B cell (primary cell): ENCODE measurements at regions of chr12 and their contacts with region 1.

Region 1: DNA sequence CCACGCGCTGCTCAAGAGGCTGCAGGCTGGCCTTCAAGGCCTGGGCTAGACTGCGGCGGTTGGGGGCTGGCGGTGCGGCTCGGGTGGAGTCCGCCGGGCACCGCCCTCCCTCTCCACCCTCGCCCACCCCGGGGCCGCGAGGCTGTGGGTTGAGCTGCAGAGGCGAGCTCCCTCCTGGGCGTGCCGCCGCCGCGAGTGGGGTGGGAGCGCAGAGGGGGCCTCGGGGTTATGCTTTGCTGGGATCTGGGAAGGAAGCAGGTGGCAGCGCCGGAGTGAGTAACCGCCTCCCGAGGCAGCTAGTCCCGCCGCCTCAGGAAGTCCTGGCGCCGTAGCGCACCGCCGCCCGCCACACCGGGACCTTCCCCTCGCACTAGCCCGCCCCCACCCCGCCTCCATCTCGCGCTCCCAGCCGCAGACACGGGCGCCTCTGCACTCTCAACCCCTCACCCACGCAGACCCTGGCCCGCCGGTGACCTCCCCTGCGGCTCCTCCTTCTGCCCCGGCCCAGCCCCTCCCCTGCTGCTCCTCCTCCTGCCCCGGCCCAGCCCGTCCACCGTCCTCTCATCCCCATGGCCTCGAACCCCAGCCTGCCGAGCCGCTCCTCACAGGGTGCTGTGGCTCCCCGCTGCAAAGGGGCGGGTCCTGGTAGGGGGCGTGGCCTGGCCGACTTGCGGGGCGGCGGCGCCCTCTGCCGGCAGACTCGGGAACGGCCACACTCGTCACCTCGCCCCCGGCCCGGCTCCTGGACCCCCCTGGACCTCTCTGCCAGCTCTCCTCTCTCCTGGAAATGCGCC is 16.6 kb downstream of the TAMALIN start:
- DNase-seq: peak; percentile 93
- ATAC-seq: peak; percentile 71
- H3K4me3 ChIP-seq: peak overlapping the region in 4 of 5 experiments; percentile 53 to 77 (median 60)
- H3K4me3 Mint-ChIP-seq: peak overlapping the region; percentile 88
- H3K27ac ChIP-seq: peak overlapping the region in 1 of 2 donors; percentile 31
- H3K27ac Mint-ChIP-seq: peak overlapping the region; percentile 53
- H3K4me1 ChIP-seq: peaks cover 35 to 56% of the 10 kb centered on the region in 2 donors
- H3K4me1 Mint-ChIP-seq: peaks cover 52% of the 10 kb centered on the region
- H3K27me3 ChIP-seq: no peaks in the 10 kb centered on the region
- H3K27me3 Mint-ChIP-seq: no peaks in the 10 kb centered on the region
- CTCF ChIP-seq: peak; percentile 93

Region 2: DNA sequence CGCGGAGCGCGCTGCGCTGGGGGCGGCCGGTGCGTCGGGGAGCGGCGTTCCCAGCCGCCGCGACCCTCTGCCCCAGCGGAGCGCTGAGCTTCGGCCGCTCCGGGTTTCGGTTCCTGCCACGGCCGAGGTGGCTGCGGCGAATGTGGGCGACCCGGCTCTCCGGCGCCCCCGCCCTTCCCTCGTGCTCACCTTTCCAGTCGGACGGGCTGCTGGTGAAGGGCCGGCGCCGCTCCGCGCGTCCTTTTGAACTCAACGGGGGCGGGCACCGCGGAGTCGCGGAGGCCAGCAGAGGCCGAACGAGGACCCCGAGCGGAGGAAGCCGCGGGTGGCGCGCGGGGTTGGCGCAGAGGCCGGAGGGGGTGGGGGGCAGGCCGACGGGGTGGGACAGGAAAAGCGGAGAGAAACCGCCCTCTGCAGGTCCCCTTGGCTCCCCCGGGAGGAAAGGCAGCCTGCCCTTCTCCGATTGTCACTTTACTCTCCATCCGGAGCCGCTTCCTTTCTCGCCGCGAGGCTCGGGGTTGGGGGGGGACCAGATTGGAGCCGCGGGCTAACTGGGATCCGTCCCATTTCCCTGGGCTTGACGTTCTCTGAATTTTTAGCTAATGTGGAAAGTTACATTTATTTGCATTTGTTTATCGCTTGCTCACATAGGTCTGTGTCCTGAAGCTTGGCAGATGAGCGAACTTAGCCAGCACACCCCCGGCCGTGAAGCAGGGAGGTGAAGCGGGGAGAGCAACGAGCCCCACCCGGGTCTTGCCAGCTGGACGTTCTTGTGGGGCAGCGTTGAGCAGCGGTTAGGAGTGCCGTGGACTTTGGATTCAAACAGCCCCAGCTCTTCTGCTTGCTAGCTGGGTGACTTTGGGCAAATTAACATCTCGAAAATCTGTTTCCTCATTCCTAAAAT is 753.1 kb before region 1 on chr12 and contains the start of gene SMAGP:
- CTCF ChIA-PET with region 1: no interaction called
- POLR2A ChIA-PET with region 1: no interaction called
- intact Hi-C with region 1: no loop called
- DNase-seq: peak; percentile 79
- ATAC-seq: peak; percentile 75
- H3K4me3 ChIP-seq: peak within 1 kb of the TSS; percentile 52 to 86 (median 74)
- H3K4me3 Mint-ChIP-seq: peak within 1 kb of the TSS; percentile 95
- H3K27ac ChIP-seq: peak within 1 kb of the TSS; percentile 12 to 64
- H3K27ac Mint-ChIP-seq: peak within 1 kb of the TSS; percentile 91
- H3K4me1 ChIP-seq: peaks cover 19 to 20% of the 10 kb centered on the region in 2 donors
- H3K4me1 Mint-ChIP-seq: peaks cover 31% of the 10 kb centered on the region
- H3K27me3 ChIP-seq: no peaks in the 10 kb centered on the region
- H3K27me3 Mint-ChIP-seq: no peaks in the 10 kb centered on the region
- CTCF ChIP-seq: no peak
- total RNA-seq, gene SMAGP: 8.0 and 10.4 TPM in 2 replicates

Region 3: DNA sequence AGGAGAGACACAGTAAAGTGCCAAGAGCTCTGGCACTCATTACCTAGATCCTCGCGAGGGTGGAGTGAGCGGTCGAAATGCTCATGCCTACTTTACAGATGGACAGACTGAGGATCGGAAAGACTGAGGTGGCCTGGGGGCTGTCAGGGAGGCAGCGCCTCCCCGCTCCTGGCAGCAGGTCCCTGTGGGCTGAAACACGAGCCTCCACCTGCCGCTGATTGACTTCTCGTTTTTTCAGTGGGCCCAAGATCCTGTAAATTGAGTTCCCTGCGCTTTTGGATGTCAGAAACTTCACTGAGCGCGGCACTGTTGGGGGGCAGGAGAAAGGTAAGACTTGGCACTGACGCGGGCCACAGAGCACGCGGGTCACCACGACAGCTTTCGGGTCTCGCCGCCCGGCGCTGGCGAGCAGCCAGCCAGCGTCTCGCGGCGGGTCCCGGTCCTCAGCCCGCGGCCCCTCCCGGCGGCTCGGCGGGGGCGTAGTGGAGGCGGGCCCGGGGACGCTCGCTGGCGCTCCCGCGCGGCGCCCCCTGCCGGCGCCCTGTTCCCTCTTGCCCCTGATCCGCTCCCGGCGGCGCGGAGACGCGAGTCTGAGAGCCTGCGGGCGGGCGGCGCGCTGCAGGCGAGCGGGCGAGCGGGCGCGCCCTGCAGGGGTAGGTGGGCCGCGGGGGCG is 432.9 kb before region 1 on chr12:
- CTCF ChIA-PET with region 1: no interaction called
- POLR2A ChIA-PET with region 1: no interaction called
- intact Hi-C with region 1: no loop called
- DNase-seq: peak; percentile 84
- ATAC-seq: peak; percentile 88
- H3K4me3 ChIP-seq: peak overlapping the region; percentile 11 to 56 (median 50)
- H3K4me3 Mint-ChIP-seq: peak overlapping the region; percentile 90
- H3K27ac ChIP-seq: no peak overlapping the region
- H3K27ac Mint-ChIP-seq: peak overlapping the region; percentile 73
- H3K4me1 ChIP-seq: peaks cover 12 to 16% of the 10 kb centered on the region in 2 donors
- H3K4me1 Mint-ChIP-seq: peaks cover 19% of the 10 kb centered on the region
- H3K27me3 ChIP-seq: peaks cover 0 to 29% (median 26%) of the 10 kb centered on the region in 4 experiments
- H3K27me3 Mint-ChIP-seq: peaks cover 51% of the 10 kb centered on the region
- CTCF ChIP-seq: peak; percentile 58

Region 4: DNA sequence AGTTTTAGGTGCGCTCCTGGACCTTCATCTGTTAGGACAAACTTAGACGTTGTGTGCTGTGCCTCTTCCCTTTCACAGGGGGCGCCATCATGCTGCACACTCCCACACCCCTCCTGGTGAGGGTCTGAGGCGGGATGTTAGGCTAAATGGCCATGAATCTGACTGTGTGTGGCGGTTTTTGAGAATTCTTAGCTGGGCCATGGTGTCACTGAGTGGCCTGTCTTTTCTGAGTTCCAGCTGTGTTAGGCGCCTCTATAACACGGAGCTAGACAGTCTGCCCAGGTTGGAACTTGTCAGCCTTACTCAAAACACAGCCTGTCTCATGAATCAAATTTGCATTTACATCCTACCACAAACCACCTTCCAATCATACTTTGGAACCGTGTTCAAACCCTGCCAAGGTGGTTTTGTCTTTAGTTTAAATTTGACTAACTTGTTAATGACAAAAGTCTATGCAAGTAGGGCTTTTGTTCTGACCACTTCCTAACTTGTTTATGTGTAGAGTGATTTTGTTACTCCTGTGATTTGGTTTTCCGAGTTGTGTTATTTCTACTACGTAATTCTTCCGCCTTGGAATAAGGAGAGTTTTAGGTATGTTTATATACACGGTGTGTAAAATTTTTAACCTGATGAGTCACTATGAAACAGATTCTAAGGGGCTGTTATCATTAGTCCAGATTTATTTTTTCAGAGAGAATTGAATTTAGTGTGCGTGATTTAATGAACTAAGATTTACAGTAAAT is 52.3 kb before region 1 on chr12:
- CTCF ChIA-PET with region 1: interaction called, 13 read pairs
- POLR2A ChIA-PET with region 1: no interaction called
- intact Hi-C with region 1: no loop called
- DNase-seq: peak; percentile 74
- ATAC-seq: peak; percentile 75
- H3K4me3 ChIP-seq: peak overlapping the region in 2 of 5 experiments; percentile 0 to 16
- H3K4me3 Mint-ChIP-seq: peak overlapping the region; percentile 60
- H3K27ac ChIP-seq: no peak overlapping the region
- H3K27ac Mint-ChIP-seq: peak overlapping the region; percentile 4
- H3K4me1 ChIP-seq: peaks cover 47 to 48% of the 10 kb centered on the region in 2 donors
- H3K4me1 Mint-ChIP-seq: peaks cover 52% of the 10 kb centered on the region
- H3K27me3 ChIP-seq: no peaks in the 10 kb centered on the region
- H3K27me3 Mint-ChIP-seq: no peaks in the 10 kb centered on the region
- CTCF ChIP-seq: peak; percentile 73

Region 5: DNA sequence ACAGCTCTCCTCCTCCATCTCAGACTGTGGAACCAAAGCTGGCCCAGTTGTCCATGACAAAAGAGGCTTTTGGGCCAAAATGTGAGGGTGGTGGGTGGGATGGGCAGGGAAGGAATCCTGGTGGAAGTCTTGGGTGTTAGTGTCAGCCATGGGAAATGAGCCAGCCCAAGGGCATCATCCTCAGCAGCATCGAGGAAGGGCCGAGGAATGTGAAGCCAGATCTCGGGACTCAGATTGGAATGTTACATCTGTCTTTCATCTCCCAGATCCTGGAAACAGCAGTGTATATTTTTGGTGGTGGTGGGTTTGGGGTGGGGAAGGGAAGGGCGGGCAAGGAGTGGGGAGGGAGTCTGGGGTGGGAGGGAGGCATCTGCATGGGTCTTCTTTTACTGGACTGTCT is 28.4 kb before region 1 on chr12:
- CTCF ChIA-PET with region 1: interaction called, 707 read pairs
- POLR2A ChIA-PET with region 1: interaction called, 5 read pairs
- intact Hi-C with region 1: loop called (anchors 1 kb)
- DNase-seq: no peak
- ATAC-seq: no peak
- H3K4me3 ChIP-seq: no peak overlapping the region
- H3K4me3 Mint-ChIP-seq: no peak overlapping the region
- H3K27ac ChIP-seq: no peak overlapping the region
- H3K27ac Mint-ChIP-seq: no peak overlapping the region
- H3K4me1 ChIP-seq: no peaks in the 10 kb centered on the region
- H3K4me1 Mint-ChIP-seq: peaks cover 2% of the 10 kb centered on the region
- H3K27me3 ChIP-seq: no peaks in the 10 kb centered on the region
- H3K27me3 Mint-ChIP-seq: no peaks in the 10 kb centered on the region
- CTCF ChIP-seq: no peak

Region 6: DNA sequence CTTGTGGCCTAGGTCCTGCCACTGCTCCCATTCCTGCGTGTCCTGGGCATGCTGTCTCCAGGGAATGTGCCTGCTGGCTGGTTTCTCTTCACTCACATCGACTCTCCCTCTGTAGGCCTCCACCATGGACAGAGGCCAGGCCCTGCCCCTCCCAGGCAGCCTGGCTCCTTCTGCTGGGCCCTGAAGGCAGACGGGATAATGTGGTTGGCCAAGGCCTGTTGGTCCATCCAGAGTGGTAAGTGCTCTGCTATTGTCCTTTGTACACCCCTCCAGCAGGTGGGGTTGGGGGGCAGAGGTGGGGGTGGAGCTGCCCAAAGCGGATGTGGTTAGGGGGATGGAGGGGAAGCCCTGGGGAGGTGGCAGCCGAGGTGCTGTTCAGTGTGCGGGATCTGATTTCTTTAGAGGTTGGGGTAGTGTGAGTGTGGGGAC is 18.3 kb after region 1 on chr12:
- CTCF ChIA-PET with region 1: interaction called, 125 read pairs
- POLR2A ChIA-PET with region 1: interaction called, 3 read pairs
- intact Hi-C with region 1: no loop called
- DNase-seq: peak; percentile 87
- ATAC-seq: peak; percentile 65
- H3K4me3 ChIP-seq: peak overlapping the region in 4 of 5 experiments; percentile 13 to 54 (median 43)
- H3K4me3 Mint-ChIP-seq: peak overlapping the region; percentile 85
- H3K27ac ChIP-seq: peak overlapping the region; percentile 75 to 77
- H3K27ac Mint-ChIP-seq: peak overlapping the region; percentile 84
- H3K4me1 ChIP-seq: peaks cover 31 to 52% of the 10 kb centered on the region in 2 donors
- H3K4me1 Mint-ChIP-seq: peaks cover 59% of the 10 kb centered on the region
- H3K27me3 ChIP-seq: no peaks in the 10 kb centered on the region
- H3K27me3 Mint-ChIP-seq: no peaks in the 10 kb centered on the region
- CTCF ChIP-seq: peak; percentile 57

Region 7: GRCh38 chr12:52069327-52070184 is 46.2 kb after region 1 on chr12 and contains the start of gene ATG101:
- CTCF ChIA-PET with region 1: interaction called, 1,315 read pairs
- POLR2A ChIA-PET with region 1: interaction called, 6 read pairs
- intact Hi-C with region 1: loop called (anchors 1 kb)
- DNase-seq: peak; percentile 98
- ATAC-seq: peak; percentile 94
- H3K4me3 ChIP-seq: peak within 1 kb of the TSS; percentile 65 to 98 (median 93)
- H3K4me3 Mint-ChIP-seq: peak within 1 kb of the TSS; percentile 90
- H3K27ac ChIP-seq: peak within 1 kb of the TSS; percentile 90 to 93
- H3K27ac Mint-ChIP-seq: peak within 1 kb of the TSS; percentile 96
- H3K4me1 ChIP-seq: peaks cover 29 to 48% of the 10 kb centered on the region in 2 donors
- H3K4me1 Mint-ChIP-seq: peaks cover 46% of the 10 kb centered on the region
- H3K27me3 ChIP-seq: peaks cover 0 to 5% (median 0%) of the 10 kb centered on the region in 4 experiments
- H3K27me3 Mint-ChIP-seq: peaks cover 3% of the 10 kb centered on the region
- CTCF ChIP-seq: peak; percentile 79
- total RNA-seq, gene ATG101: 19.4 and 20.0 TPM in 2 replicates

Region 8: GRCh38 chr12:52093346-52093745 is 70.0 kb after region 1 on chr12:
- CTCF ChIA-PET with region 1: interaction called, 1,315 read pairs
- POLR2A ChIA-PET with region 1: interaction called, 3 read pairs
- intact Hi-C with region 1: no loop called
- DNase-seq: no peak
- ATAC-seq: no peak
- H3K4me3 ChIP-seq: no peak overlapping the region
- H3K4me3 Mint-ChIP-seq: no peak overlapping the region
- H3K27ac ChIP-seq: no peak overlapping the region
- H3K27ac Mint-ChIP-seq: no peak overlapping the region
- H3K4me1 ChIP-seq: peaks cover 5 to 6% of the 10 kb centered on the region in 2 donors
- H3K4me1 Mint-ChIP-seq: peaks cover 7% of the 10 kb centered on the region
- H3K27me3 ChIP-seq: peaks cover 0 to 18% (median 4%) of the 10 kb centered on the region in 4 experiments
- H3K27me3 Mint-ChIP-seq: peaks cover 51% of the 10 kb centered on the region
- CTCF ChIP-seq: no peak